SK-N-SH (cell line): ENCODE measurements at regions of chr17 and their contacts with region 1.

Region 1: DNA sequence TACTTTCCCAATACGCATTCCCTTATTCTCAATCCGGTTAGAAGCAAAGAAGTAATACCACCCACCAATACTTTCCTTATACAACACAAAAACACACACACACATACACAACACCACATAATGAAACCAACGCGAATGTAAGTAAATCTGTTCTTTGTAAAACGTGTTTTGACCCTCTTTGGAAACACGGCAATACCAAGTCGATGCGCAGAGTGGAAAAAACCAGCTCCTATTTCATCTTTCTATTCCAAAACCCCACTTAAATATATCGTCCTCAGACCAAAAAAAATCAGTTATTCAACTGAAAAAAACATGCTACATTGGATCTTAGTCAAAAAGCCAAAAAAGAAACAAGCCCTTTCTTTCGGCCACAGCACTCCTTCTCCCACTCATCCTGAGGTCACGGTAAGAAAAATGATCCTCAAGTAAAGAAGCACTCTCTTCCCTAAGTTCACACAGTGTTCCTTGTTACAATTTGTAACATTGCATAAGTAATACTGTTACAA is 31.0 kb upstream of the ARL4D start:
- DNase-seq: peak; percentile 67
- H3K4me3 ChIP-seq: peak overlapping the region in 1 of 2 experiments; percentile 36; a peak in 2 of 4 replicates
- H3K27ac ChIP-seq: peak overlapping the region; percentile 92 to 95
- H3K4me1 ChIP-seq: peaks cover 7 to 11% of the 10 kb centered on the region in 2 experiments; a peak in 3 of 4 replicates
- H3K27me3 ChIP-seq: no peaks in the 10 kb centered on the region
- CTCF ChIP-seq: no peak
- EP300 ChIP-seq: peak; percentile 22 to 31; a peak in 1 of 4 replicates
- RAD21 ChIP-seq: no peak; the same call in 1 of the 2 replicates

Region 2: GRCh38 chr17:43024407-43025289 is 343.1 kb before region 1 on chr17 and contains the start of gene RND2:
- CTCF ChIA-PET with region 1: no interaction called
- POLR2A ChIA-PET with region 1: interaction called, 11 read pairs
- DNase-seq: peak; percentile 98
- H3K4me3 ChIP-seq: peak within 1 kb of the TSS; percentile 63 to 81
- H3K27ac ChIP-seq: peak within 1 kb of the TSS; percentile 68 to 86
- H3K4me1 ChIP-seq: peaks cover 0 to 13% of the 10 kb centered on the region in 2 experiments; a peak in 1 of 4 replicates
- H3K27me3 ChIP-seq: no peaks in the 10 kb centered on the region
- CTCF ChIP-seq: peak; percentile 81
- EP300 ChIP-seq: no peak
- RAD21 ChIP-seq: peak; percentile 85
- polyA plus RNA-seq, gene RND2: 8.9 and 10.5 TPM in 2 replicates

Region 3: DNA sequence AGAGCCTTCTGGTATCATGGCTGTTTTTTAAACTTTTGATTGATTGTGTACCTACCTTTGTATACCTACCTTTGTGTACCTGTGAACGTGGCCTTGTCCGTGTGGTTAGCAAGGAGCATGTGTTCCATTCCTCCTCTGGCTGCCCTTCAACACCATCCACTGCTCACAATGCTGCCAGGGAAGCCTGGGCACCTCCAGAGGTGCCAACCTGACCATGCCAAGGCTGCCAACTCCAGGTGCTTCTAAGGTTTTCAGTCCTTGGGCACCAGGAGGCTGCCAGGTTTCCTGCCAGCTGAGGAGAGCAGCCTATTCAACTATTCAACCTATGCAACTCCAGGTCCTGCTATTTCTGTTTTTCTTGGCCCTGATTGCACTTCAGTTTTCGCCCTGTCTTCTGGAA is 13.4 kb after region 1 on chr17:
- CTCF ChIA-PET with region 1: interaction called, 6 read pairs
- POLR2A ChIA-PET with region 1: interaction called, 136 read pairs
- DNase-seq: no peak
- H3K4me3 ChIP-seq: no peak overlapping the region
- H3K27ac ChIP-seq: no peak overlapping the region
- H3K4me1 ChIP-seq: no peaks in the 10 kb centered on the region
- H3K27me3 ChIP-seq: no peaks in the 10 kb centered on the region
- CTCF ChIP-seq: no peak
- EP300 ChIP-seq: no peak
- RAD21 ChIP-seq: no peak

Region 4: GRCh38 chr17:43388359-43389045 is 20.7 kb after region 1 on chr17:
- CTCF ChIA-PET with region 1: interaction called, 27 read pairs
- POLR2A ChIA-PET with region 1: interaction called, 136 read pairs
- DNase-seq: peak; percentile 84
- H3K4me3 ChIP-seq: peak overlapping the region; percentile 58 to 77
- H3K27ac ChIP-seq: peak overlapping the region; percentile 91 to 99
- H3K4me1 ChIP-seq: no peaks in the 10 kb centered on the region; a peak in 1 of 4 replicates
- H3K27me3 ChIP-seq: no peaks in the 10 kb centered on the region
- CTCF ChIP-seq: no peak
- EP300 ChIP-seq: no peak
- RAD21 ChIP-seq: no peak